ENCODE measurements at regions of chr12 and their contacts with region 1.

Region 1: GRCh38 chr12:15856097-15856982 is 25.8 kb upstream of the STRAP start:
- DNase-seq: no peak
- H3K4me3 ChIP-seq: no peak overlapping the region
- H3K27ac ChIP-seq: no peak overlapping the region
- H3K4me1 ChIP-seq: peaks cover 0 to 7% (median 0%) of the 10 kb centered on the region in 4 donors
- H3K27me3 ChIP-seq: no peaks in the 10 kb centered on the region
- CTCF ChIP-seq: peak; percentile 77 to 85 (median 78)
- EP300 ChIP-seq: no peak
- POLR2A ChIP-seq: no peak

Region 2: GRCh38 chr12:15590180-15590826 is 266.0 kb before region 1 on chr12:
- intact Hi-C with region 1: loop called (anchors 1 kb)
- DNase-seq: peak; percentile 68
- H3K4me3 ChIP-seq: peak overlapping the region; percentile 37 to 53 (median 40)
- H3K27ac ChIP-seq: no peak overlapping the region
- H3K4me1 ChIP-seq: peaks cover 4 to 9% (median 7%) of the 10 kb centered on the region in 4 donors
- H3K27me3 ChIP-seq: peaks cover 0 to 9% (median 0%) of the 10 kb centered on the region in 4 donors
- CTCF ChIP-seq: peak; percentile 91 to 93 (median 91)
- EP300 ChIP-seq: no peak
- POLR2A ChIP-seq: no peak

Region 3: DNA sequence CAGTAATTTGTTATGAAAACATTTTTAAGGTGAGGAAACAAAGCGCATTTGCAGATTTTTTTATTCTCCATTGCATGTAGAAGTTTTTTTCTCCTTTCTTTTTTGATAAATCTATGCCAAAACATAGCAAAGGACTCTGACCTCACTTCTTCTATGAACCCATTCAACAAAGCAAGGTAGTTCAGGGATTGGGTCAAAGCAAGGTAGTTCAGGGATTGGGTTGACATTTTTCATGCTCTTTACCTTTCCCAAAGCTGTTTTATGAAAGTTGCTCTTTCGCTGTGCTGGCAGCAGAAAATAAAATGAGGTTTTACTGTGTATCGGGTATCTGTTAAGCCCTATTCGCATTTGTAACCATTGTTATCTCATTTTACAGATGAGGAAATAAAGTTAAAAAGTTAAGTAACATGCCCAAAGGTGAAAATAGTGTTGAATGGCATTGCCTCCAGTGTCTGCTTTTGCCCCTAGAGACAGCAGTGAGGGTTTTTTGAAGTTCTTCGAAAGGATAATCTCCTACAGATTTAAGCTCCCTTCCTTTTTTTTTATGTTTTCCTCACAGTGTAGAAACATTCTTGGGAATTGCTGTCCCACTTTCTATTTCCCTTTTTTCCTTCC is 36.4 kb after region 1 on chr12:
- intact Hi-C with region 1: no loop called
- DNase-seq: no peak
- H3K4me3 ChIP-seq: no peak overlapping the region
- H3K27ac ChIP-seq: no peak overlapping the region
- H3K4me1 ChIP-seq: peaks cover 1 to 18% (median 15%) of the 10 kb centered on the region in 4 donors
- H3K27me3 ChIP-seq: no peaks in the 10 kb centered on the region
- CTCF ChIP-seq: no peak
- EP300 ChIP-seq: no peak
- POLR2A ChIP-seq: no peak